ENCODE measurements at regions of chr12 and their contacts with region 1.

Region 1: DNA sequence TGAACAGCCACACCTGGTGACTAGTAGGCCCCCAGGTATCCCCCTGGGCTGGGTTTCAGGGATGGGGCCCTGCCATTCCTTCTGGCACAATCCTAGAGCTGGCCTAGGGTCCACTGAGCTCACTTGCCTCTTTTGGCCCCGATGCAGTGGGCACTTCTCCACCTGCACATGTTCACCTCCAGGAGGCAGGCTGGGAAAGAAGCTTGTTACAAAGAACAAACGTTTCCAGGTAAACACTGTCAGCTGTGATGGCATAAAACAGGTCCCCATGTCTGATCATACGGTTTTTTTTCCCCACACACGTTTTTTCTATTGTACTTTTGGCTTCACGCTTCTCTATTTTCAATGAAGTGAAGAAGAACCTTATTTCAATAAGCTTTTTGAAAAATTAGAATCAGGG is 15.8 kb upstream of the HVCN1 start:
- DNase-seq: no peak
- H3K4me3 Mint-ChIP-seq: no peak overlapping the region
- H3K27ac Mint-ChIP-seq: no peak overlapping the region
- H3K4me1 Mint-ChIP-seq: peaks cover 5% of the 10 kb centered on the region
- H3K27me3 Mint-ChIP-seq: no peaks in the 10 kb centered on the region

Region 2: DNA sequence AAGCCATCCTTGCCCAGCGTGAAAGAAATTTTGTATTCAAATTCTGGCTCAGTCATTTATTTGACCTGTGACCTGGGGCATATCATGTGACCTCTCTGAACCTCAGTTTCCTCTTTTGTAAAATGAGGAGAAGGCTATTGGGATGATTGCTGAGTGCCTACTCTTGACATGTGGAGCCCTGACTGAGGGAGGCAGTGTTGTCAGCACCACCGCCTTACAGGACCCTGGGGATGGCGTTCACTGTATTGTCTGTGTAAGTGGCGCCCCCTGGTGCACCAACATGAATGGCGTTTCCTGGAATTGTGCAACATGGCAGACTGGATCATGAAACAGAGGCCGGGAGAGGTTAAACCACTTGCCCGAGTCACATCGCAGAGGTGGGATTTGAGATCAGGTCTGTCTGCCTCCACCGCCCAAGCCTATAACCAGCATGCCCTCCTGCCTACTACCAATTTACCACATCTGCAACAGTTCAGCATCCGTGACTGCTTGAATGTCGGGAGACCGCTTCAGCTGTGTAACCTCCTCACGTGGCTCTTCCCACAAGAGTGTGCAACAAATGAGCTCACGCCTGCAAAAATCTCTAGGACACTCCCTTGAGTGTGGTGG is 121.9 kb after region 1 on chr12:
- CTCF ChIA-PET with region 1: interaction called, 13 read pairs
- POLR2A ChIA-PET with region 1: no interaction called
- DNase-seq: peak; percentile 89
- H3K4me3 Mint-ChIP-seq: peak overlapping the region; percentile 13
- H3K27ac Mint-ChIP-seq: no peak overlapping the region
- H3K4me1 Mint-ChIP-seq: peaks cover 7% of the 10 kb centered on the region
- H3K27me3 Mint-ChIP-seq: peaks cover 6% of the 10 kb centered on the region